SK-N-SH (cell line): ENCODE measurements at regions of chr19 and their contacts with region 1.

Region 1: GRCh38 chr19:984165-984967 is at the start of gene WDR18:
- DNase-seq: peak; percentile 99
- H3K4me3 ChIP-seq: peak within 1 kb of the TSS; percentile 91 to 99
- H3K27ac ChIP-seq: peak within 1 kb of the TSS; percentile 66 to 89
- H3K4me1 ChIP-seq: peaks cover 0 to 14% of the 10 kb centered on the region in 2 experiments; a peak in 2 of 4 replicates
- H3K27me3 ChIP-seq: no peaks in the 10 kb centered on the region
- CTCF ChIP-seq: no peak
- EP300 ChIP-seq: no peak
- RAD21 ChIP-seq: no peak
- polyA plus RNA-seq, gene WDR18: 47.9 and 51.5 TPM in 2 replicates

Region 2: DNA sequence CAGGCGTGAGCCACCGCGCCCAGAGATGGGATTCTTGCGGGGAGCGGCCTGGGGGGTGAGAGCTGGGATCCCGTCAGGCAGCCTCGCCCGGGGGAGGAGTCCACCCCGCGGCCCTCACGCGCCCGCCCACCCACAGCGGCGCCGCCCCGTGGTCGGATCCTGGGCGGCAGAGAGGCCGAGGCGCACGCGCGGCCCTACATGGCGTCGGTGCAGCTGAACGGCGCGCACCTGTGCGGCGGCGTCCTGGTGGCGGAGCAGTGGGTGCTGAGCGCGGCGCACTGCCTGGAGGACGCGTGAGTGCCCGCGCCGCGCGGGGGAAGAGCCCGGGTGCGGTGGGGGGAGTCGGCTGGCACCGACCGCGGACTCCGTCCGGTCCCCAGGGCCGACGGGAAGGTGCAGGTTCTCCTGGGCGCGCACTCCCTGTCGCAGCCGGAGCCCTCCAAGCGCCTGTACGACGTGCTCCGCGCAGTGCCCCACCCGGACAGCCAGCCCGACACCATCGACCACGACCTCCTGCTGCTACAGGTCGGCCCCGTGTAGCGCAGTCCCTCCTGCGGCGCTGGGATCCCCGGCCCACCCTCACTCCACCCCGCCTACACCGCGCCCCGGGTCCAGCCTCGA is 123.8 kb before region 1 on chr19:
- CTCF ChIA-PET with region 1: interaction called, 14 read pairs
- POLR2A ChIA-PET with region 1: no interaction called
- DNase-seq: peak; percentile 83
- H3K4me3 ChIP-seq: peak overlapping the region; percentile 46; a peak in 3 of 4 replicates
- H3K27ac ChIP-seq: no peak overlapping the region
- H3K4me1 ChIP-seq: peaks cover 0 to 4% of the 10 kb centered on the region in 2 experiments; a peak in 1 of 4 replicates
- H3K27me3 ChIP-seq: peaks cover 23% of the 10 kb centered on the region
- CTCF ChIP-seq: no peak
- EP300 ChIP-seq: no peak
- RAD21 ChIP-seq: no peak

Region 3: GRCh38 chr19:925526-926322 is 58.6 kb before region 1 on chr19 and contains the start of gene ARID3A:
- CTCF ChIA-PET with region 1: interaction called, 161 read pairs
- POLR2A ChIA-PET with region 1: interaction called, 9 read pairs
- DNase-seq: peak; percentile 95
- H3K4me3 ChIP-seq: peak within 1 kb of the TSS; percentile 86 to 91
- H3K27ac ChIP-seq: peak within 1 kb of the TSS; percentile 54 to 85
- H3K4me1 ChIP-seq: peaks cover 7 to 18% of the 10 kb centered on the region in 2 experiments; a peak in 1 of 4 replicates
- H3K27me3 ChIP-seq: peaks cover 8% of the 10 kb centered on the region
- CTCF ChIP-seq: no peak
- EP300 ChIP-seq: no peak; a peak in 1 of 4 replicates
- RAD21 ChIP-seq: no peak; the same call in 1 of the 2 replicates
- polyA plus RNA-seq, gene ARID3A: 4.4 and 8.6 TPM in 2 replicates

Region 4: DNA sequence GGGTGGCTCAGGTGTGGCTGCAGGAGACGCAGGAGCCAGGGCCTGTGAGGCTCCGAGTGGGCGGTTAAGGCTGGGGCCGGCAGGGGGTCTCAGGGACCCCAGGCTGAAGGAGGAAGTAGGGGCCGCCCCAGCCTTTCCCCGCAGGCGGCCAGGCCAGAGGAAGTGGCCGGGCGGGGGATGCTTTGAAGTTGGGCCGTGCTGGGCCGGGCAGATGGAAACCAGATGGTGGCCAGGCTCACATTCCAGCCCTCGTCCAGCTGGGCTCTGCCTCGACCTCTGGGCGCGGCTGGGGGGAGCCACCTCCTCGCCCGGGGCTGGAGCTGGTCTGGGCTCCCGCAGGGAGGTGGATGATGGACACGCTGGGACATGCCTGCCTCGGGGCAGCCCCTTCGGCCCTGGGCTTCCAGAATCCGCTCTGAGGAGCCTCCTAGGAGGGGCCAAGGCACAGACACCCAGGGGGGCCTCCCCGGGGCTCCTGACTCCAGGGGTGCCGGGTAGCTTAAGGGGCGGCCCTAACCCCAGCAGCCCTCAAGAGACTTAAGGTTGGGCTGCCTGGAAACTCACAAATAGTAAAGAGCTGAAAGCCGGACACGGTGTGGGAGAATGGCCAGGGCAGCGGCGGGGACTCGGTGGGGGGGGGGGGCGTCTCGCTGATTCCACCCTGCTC is 51.0 kb before region 1 on chr19:
- CTCF ChIA-PET with region 1: interaction called, 11 read pairs
- POLR2A ChIA-PET with region 1: interaction called, 5 read pairs
- DNase-seq: peak; percentile 94
- H3K4me3 ChIP-seq: peak overlapping the region; percentile 1 to 46; a peak in 3 of 4 replicates
- H3K27ac ChIP-seq: peak overlapping the region; percentile 54 to 89
- H3K4me1 ChIP-seq: peaks cover 13 to 39% of the 10 kb centered on the region in 2 experiments; a peak in 2 of 4 replicates
- H3K27me3 ChIP-seq: no peaks in the 10 kb centered on the region
- CTCF ChIP-seq: no peak
- EP300 ChIP-seq: peak in 1 of 2 experiments; percentile 85; a peak in 2 of 4 replicates
- RAD21 ChIP-seq: no peak

Region 5: DNA sequence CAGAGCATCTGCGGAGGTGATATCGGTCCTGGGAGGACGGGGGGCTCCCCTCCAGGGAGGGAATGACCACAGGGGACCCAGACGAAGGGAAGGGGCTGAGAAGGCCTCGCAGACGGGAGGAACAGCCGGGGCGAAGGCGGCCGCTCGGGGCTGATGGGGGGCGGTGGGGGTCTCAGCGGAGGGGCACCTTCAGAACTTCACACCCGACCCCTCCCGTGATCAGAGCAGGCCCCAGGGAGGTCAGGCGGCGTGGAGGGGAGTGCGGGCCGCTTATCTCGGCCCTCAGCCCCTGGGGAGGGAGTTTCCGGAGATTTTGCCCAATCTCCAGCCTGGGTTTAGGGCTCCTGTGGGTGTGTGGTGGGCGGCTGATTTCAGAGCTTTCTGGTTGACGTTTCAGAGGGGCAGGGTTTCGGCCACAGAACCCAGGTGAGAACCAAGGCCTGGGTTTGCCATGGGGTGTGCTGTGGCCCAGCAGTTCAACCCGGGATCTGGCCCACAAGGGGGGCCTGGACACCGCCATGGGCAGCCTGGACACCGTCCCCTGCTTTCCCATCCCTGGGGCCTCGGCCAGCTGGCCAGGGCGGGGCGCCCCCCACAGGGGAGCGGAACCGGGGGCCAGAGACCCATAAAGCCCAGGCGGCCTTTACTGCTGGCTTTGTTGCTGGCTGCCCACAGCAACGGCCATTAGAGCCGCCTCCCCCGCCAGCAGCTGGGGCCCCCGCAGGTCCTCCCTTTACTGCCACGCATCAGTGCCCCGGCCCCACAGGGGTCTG is 29.5 kb before region 1 on chr19:
- CTCF ChIA-PET with region 1: interaction called, 12 read pairs
- POLR2A ChIA-PET with region 1: no interaction called
- DNase-seq: no peak
- H3K4me3 ChIP-seq: no peak overlapping the region
- H3K27ac ChIP-seq: no peak overlapping the region
- H3K4me1 ChIP-seq: peaks cover 5 to 21% of the 10 kb centered on the region in 2 experiments; a peak in 2 of 4 replicates
- H3K27me3 ChIP-seq: no peaks in the 10 kb centered on the region
- CTCF ChIP-seq: no peak
- EP300 ChIP-seq: no peak
- RAD21 ChIP-seq: no peak

Region 6: DNA sequence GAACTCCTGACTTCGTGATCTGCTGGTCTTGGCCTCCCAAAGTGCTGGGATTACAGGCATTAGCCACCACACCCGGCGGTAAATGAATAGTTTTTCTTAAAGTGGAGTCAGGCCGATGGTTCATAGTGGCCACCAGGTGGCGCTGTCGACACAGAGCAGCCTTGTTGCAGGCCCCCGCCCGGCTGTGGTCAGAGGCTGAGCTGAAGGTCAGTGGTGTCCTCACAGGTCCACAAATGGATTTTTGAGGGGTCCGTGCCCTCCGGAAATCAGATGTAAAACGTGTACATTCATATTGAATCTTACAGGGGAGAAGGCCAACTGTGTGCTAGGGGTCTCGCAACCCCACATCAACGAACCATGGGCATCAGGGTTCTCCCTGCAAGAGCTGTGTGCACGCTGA is 13.7 kb before region 1 on chr19:
- CTCF ChIA-PET with region 1: interaction called, 30 read pairs
- POLR2A ChIA-PET with region 1: interaction called, 4 read pairs
- DNase-seq: peak; percentile 72
- H3K4me3 ChIP-seq: no peak overlapping the region; a peak in 1 of 4 replicates
- H3K27ac ChIP-seq: no peak overlapping the region
- H3K4me1 ChIP-seq: no peaks in the 10 kb centered on the region
- H3K27me3 ChIP-seq: no peaks in the 10 kb centered on the region
- CTCF ChIP-seq: peak; percentile 77
- EP300 ChIP-seq: no peak
- RAD21 ChIP-seq: no peak

Region 7: GRCh38 chr19:996051-996838 is 11.9 kb after region 1 on chr19:
- CTCF ChIA-PET with region 1: interaction called, 18 read pairs
- POLR2A ChIA-PET with region 1: interaction called, 23 read pairs
- DNase-seq: peak; percentile 83
- H3K4me3 ChIP-seq: peak overlapping the region; percentile 13 to 28; a peak in 2 of 4 replicates
- H3K27ac ChIP-seq: no peak overlapping the region
- H3K4me1 ChIP-seq: peaks cover 0 to 9% of the 10 kb centered on the region in 2 experiments; a peak in 1 of 4 replicates
- H3K27me3 ChIP-seq: peaks cover 36% of the 10 kb centered on the region; the same call in 1 of the 2 replicates
- CTCF ChIP-seq: no peak
- EP300 ChIP-seq: no peak
- RAD21 ChIP-seq: no peak